H1 (cell line): ENCODE measurements at regions of chr7 and their contacts with region 1.

Region 1: DNA sequence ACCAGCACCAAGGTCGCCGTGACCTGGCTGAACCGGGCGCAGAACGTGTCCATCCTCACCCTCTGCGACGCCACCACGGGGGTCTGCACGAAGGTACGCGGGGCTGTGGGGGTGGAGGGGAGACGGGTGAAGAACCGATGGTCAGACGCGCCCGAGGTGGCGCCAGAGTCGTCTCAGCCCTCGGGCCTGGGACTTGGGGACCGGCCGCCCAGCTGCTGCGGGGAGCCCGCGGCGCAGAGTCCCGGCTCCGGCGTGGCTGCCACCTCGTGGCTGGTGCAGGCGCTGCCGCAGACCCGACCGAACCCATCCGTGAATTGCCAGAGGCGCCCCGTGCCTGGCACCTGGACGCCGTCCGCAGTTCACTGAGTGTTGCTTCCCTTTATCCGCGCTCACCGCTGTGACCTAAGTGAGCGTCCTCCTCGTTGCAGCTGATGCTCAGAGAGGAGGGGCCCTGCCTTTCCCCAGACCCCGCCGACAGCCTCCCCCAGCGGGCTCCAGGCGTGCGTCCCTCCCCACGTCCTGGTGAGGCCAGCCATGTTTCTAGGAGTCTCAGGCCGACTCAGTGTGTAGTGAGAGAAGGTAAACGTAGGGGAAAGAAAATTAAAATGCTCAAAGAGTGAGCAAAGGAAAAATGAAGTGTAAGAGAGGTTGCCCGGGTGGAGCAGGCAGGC is 208.7 kb downstream of the PAXIP1 start:
- DNase-seq: peak in 1 of 2 experiments; percentile 90
- H3K4me3 ChIP-seq: peak overlapping the region; percentile 11 to 57 (median 32); a peak in 7 of 8 replicates
- H3K27ac ChIP-seq: no peak overlapping the region
- H3K4me1 ChIP-seq: peaks cover 0 to 2% (median 0%) of the 10 kb centered on the region in 4 experiments; a peak in 3 of 7 replicates
- H3K27me3 ChIP-seq: no peaks in the 10 kb centered on the region; a peak in 1 of 7 replicates
- CTCF ChIP-seq: peak; percentile 83 to 91 (median 90)
- EP300 ChIP-seq: no peak
- POLR2A ChIP-seq: no peak; a peak in 1 of 3 replicates
- RAD21 ChIP-seq: peak; percentile 62 to 73

Region 2: DNA sequence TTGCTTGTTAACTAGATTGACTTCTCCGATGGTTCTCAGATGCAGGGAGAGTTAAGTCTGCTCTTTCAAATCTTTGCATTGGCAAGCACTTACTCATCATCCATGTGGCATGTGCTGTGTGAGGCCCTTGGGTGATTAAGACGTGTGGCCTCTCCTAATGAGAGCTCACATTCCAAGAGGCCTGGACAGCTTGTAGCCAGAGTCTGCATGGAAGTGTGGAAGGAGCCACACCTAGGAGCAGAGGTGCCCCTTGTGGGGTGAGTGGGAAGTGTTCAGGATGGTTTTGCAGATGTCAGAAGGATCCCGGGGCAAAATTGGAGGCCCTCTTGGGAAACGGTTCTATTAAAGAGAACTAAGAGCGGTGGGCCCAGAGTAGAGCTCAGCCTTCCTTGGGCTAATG is 17.2 kb before region 1 on chr7:
- CTCF ChIA-PET with region 1: interaction called, 15 read pairs
- POLR2A ChIA-PET with region 1: no interaction called
- DNase-seq: no peak
- H3K4me3 ChIP-seq: no peak overlapping the region
- H3K27ac ChIP-seq: no peak overlapping the region
- H3K4me1 ChIP-seq: peaks cover 0 to 3% (median 0%) of the 10 kb centered on the region in 4 experiments; a peak in 1 of 7 replicates
- H3K27me3 ChIP-seq: no peaks in the 10 kb centered on the region
- CTCF ChIP-seq: peak; percentile 37 to 46 (median 42); a peak in 3 of 4 replicates
- EP300 ChIP-seq: no peak
- POLR2A ChIP-seq: no peak
- RAD21 ChIP-seq: peak; percentile 35 to 37; a peak in 2 of 4 replicates

Region 3: DNA sequence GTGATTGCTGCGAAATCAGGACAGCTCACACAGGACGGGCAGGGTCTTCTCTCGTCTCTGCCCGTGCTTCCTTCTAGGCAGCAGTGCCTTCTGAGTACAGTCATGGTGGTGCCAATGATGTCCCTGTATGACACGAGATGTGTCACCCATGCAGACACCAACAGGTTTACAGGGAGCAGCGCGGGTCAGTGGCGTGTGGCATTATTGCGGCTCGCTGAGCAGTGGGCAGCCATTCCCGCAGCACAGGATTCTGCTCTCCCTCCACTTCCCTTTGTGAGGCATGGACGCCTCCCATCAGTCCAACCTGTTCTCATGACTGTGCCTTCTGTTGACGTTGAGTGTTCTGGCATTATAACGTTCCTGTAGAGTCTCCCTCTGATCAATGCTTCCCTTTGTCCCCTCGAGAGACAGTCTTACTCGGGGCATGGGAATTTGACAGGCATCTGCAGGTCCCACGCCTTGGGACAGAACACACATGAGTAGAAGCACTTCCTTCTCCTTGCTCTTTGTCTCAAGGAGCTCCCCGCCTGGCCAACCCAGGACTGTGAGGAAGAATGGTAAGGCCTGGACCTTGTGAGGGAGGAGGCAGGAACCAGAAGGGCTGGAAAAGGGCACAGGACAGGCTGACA is 10.8 kb before region 1 on chr7:
- CTCF ChIA-PET with region 1: interaction called, 31 read pairs
- POLR2A ChIA-PET with region 1: no interaction called
- DNase-seq: no peak
- H3K4me3 ChIP-seq: no peak overlapping the region
- H3K27ac ChIP-seq: no peak overlapping the region
- H3K4me1 ChIP-seq: peaks cover 0 to 3% (median 0%) of the 10 kb centered on the region in 4 experiments; a peak in 1 of 7 replicates
- H3K27me3 ChIP-seq: no peaks in the 10 kb centered on the region
- CTCF ChIP-seq: no peak
- EP300 ChIP-seq: no peak
- POLR2A ChIP-seq: no peak
- RAD21 ChIP-seq: no peak

Region 4: DNA sequence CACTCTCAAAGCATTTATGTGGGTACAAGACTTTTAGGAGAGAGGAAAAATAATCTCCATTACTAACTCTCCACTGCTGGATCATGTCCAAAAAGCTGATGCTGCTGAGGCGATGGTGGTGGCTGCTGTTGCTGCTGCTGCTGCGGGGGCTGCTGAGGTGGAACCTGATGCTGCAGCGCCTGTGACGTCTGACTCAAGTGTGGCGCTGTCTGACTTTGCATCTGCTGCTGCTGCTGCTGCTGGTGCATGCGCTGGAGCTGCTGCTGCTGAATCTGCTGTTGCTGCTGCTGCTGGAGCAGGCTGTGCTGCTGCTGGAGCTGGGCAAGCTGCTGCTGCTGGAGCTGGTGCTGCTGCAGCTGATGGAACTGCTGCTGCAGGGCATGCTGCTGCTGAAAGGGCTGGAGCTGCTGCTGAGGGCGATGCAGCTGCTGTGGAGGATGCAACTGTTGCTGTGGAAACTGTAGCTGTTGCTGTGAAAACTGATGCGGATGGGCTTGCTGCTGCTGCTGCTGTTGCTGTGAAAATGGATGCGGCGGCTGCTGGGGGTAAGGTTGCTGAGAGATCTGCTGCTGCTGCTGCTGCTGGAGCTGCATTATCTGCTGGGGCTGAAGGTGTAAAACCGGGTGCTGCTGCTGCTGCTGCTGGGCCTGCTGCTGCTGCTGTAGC is 174.2 kb after region 1 on chr7:
- CTCF ChIA-PET with region 1: no interaction called
- POLR2A ChIA-PET with region 1: no interaction called
- DNase-seq: no peak
- H3K4me3 ChIP-seq: no peak overlapping the region
- H3K27ac ChIP-seq: no peak overlapping the region
- H3K4me1 ChIP-seq: no peaks in the 10 kb centered on the region
- H3K27me3 ChIP-seq: no peaks in the 10 kb centered on the region
- CTCF ChIP-seq: no peak
- EP300 ChIP-seq: no peak
- POLR2A ChIP-seq: no peak
- RAD21 ChIP-seq: no peak